HCT116 (cell line): ENCODE measurements at regions of chr9 and their contacts with region 1.

Region 1: DNA sequence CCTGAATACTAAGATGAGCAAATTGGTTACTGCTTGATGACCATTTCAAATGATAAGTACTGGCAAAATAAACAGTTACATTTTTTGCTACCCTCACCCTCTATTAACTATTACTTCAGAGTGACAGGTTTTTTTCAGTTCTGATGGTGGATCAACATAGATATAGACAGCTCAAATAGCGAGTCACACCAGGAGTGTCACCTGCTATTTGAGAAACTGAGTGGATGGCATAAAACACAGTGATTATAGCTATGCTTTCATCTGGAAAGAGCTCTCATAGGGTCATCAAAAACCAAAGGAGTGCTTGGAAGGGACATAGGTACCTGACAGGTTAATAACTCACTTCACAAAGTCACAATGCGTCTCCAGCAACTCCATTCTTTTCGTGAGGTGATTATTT is 244.5 kb upstream of the C9orf72 start:
- DNase-seq: no peak
- ATAC-seq: no peak
- H3K4me3 ChIP-seq: no peak overlapping the region
- H3K27ac ChIP-seq: no peak overlapping the region
- H3K4me1 ChIP-seq: no peaks in the 10 kb centered on the region
- H3K27me3 ChIP-seq: no peaks in the 10 kb centered on the region
- CTCF ChIP-seq: no peak
- POLR2A ChIP-seq: no peak
- RAD21 ChIP-seq: no peak

Region 2: GRCh38 chr9:27829621-27830020 is 11.9 kb after region 1 on chr9:
- CTCF ChIA-PET with region 1: no interaction called
- POLR2A ChIA-PET with region 1: no interaction called
- RAD21 ChIA-PET with region 1: no interaction called
- intact Hi-C with region 1: no loop called
- DNase-seq: no peak
- ATAC-seq: no peak
- H3K4me3 ChIP-seq: no peak overlapping the region
- H3K27ac ChIP-seq: no peak overlapping the region
- H3K4me1 ChIP-seq: no peaks in the 10 kb centered on the region
- H3K27me3 ChIP-seq: no peaks in the 10 kb centered on the region
- CTCF ChIP-seq: no peak
- POLR2A ChIP-seq: no peak
- RAD21 ChIP-seq: no peak

Region 3: DNA sequence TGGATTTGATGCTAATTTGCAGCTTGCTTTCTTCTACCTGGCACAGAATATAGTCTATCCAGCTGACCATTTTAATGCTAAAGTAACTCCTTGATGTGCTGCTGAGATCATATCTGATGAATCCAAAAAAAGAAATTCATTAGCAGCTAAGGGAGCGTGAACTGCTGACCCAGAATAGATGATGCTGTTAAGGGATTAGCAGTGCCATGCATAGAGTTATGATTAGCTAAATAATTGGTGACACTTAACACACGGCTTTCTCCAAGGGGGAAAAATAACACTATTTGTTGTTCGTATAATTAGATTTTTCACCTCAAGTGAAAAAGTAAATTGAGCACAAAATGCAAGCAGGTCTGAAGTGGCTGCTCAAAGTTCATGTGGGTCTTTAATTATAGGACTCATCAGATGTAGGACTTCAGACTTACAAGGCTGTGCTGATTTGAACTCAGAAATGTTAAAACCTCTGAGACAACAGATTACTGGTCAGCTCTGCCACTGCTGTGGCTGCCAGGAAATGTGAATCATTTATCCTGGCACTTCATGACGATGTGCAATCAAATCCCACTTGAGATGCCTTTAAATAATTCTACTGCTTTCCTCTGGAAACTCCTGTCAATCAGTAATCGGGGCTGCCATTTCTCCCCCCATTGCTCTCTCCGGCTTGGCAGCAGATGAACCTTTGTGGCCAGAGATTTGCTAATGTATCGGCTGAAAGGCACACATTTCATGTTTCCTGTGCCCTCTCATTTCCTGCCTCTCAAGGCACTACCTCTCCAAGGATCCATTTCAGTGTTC is 47.1 kb after region 1 on chr9:
- CTCF ChIA-PET with region 1: no interaction called
- POLR2A ChIA-PET with region 1: no interaction called
- RAD21 ChIA-PET with region 1: no interaction called
- intact Hi-C with region 1: loop called (anchors 10 kb)
- DNase-seq: no peak
- ATAC-seq: no peak
- H3K4me3 ChIP-seq: no peak overlapping the region
- H3K27ac ChIP-seq: no peak overlapping the region
- H3K4me1 ChIP-seq: no peaks in the 10 kb centered on the region
- H3K27me3 ChIP-seq: no peaks in the 10 kb centered on the region
- CTCF ChIP-seq: no peak
- POLR2A ChIP-seq: no peak
- RAD21 ChIP-seq: no peak